ENCODE measurements at regions of chr5 and their contacts with region 1.

Region 1: GRCh38 chr5:96344678-96345577 is 88.1 kb downstream of the PCSK1 start:
- DNase-seq: peak in 1 of 3 donors; percentile 55
- ATAC-seq: peak; percentile 96
- H3K4me3 ChIP-seq: no peak overlapping the region
- H3K4me1 ChIP-seq: no peaks in the 10 kb centered on the region
- CTCF ChIP-seq: peak; percentile 14

Region 2: DNA sequence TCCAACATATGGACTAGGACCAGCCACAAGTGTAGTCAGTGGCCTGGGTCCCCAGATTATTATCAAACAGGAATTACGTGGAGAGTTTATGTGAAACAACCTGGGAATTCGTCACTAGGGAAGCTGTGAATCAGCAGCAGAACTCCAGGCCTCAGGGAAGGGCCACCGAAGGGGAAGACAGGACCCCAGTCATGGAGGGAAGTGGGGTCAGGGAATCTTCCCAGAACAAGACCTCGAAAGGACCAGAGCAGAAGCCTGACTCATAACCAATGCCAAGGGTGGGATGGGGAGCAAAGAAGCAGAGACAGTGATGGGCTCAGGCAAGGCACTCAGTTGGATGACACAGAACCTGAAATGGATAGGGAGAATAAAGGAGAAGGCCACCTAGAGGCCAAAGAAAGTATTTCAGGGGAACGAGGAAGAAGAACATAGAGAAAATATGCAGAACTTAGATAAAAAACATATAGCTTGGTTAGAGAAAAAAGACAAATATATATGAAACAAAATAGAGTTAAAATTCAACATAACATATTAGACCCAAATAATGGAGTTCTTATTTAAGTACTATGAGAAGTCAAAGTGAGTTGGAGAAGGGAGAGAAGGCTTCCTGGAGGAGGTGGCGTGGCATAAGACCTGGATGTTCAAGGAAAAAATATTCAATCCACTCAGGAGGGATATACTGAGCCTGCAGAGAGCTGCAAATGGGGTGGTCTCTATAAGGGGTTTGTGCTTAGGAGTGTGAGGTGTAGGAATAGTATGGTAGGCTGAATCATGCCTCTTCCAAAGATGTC is 250.6 kb after region 1 on chr5:
- intact Hi-C with region 1: loop called (anchors 2 to 5 kb)
- DNase-seq: peak in 1 of 3 donors; percentile 32
- ATAC-seq: no peak
- H3K4me3 ChIP-seq: no peak overlapping the region
- H3K4me1 ChIP-seq: no peaks in the 10 kb centered on the region
- CTCF ChIP-seq: no peak

Region 3: GRCh38 chr5:96601811-96602244 is 256.9 kb after region 1 on chr5:
- intact Hi-C with region 1: loop called (anchors 2 to 5 kb)
- DNase-seq: peak in 1 of 3 donors; percentile 93
- ATAC-seq: peak; percentile 89
- H3K4me3 ChIP-seq: no peak overlapping the region
- H3K4me1 ChIP-seq: no peaks in the 10 kb centered on the region
- CTCF ChIP-seq: peak; percentile 61